ENCODE measurements at regions of chr1 and their contacts with region 1.

Region 1: GRCh38 chr1:212477014-212477679 is 44.4 kb downstream of the NENF start:
- DNase-seq: peak; percentile 71
- H3K4me3 ChIP-seq: no peak overlapping the region
- H3K27ac ChIP-seq: no peak overlapping the region
- H3K27me3 ChIP-seq: peaks cover 12% of the 10 kb centered on the region
- CTCF ChIP-seq: peak; percentile 97

Region 2: DNA sequence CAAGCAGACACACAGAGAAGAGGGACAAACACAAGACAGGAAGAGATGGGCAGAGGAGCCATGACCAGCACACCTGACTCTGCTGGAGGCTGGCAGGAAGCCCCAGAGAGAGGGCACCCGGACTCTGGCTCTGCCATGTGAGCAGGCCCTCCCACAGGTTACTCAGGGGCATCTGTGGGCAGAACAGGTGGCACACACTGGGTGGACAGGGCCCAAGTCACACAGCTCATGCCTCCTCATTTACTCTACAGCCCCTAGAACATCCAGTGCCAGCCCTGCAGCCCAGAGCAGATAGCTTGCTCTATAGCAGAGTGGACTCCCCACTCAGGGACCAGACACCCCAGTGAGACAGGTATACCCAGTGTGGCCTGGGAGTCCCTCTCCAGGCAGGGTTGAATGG is 91.1 kb before region 1 on chr1:
- CTCF ChIA-PET with region 1: no interaction called
- POLR2A ChIA-PET with region 1: no interaction called
- DNase-seq: no peak
- H3K4me3 ChIP-seq: no peak overlapping the region
- H3K27ac ChIP-seq: no peak overlapping the region
- H3K27me3 ChIP-seq: no peaks in the 10 kb centered on the region
- CTCF ChIP-seq: no peak

Region 3: DNA sequence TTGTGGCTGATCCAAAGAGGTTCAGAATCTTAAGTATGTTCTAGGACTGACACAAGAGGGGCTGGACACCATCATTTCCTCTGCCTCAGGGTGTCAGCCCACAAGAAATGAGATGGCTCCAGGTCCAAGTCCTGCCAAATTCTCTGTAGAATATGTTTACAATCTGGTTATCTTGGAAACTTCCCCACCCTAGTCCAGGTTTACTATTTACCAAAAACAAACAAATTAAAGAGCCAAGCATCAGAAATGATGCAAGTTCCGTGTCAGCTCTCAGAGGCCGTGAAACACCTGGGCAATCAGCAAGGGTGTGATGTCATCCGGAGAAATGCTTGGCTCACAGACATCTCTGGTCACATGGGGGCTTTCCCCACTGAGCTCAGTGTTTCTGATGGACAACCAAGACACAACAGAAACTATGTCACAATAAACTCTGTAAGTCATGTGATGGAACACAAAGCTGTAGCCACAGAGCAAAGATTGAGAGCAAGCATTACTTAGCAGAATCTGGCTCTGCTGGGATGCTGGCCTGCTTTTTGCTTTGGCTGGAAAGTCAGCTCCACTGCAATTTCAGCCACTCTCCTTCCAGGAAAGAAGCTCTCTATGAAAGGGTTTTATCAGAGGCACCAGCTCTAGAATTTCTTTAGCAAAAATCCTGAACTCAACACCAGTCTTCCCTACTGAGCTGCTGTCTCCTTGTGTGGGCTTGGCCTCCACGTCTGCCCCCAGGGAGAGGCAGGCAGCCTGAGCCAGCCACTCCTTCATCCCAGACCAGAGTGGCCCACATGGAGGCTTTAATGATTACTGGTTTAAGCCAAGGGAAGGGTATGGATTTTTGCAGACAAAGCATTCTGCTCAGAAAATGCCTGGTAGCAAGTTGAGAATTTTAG is 11.5 kb after region 1 on chr1:
- CTCF ChIA-PET with region 1: interaction called, 27 read pairs
- POLR2A ChIA-PET with region 1: no interaction called
- DNase-seq: peak; percentile 81
- H3K4me3 ChIP-seq: no peak overlapping the region
- H3K27ac ChIP-seq: peak overlapping the region; percentile 89
- H3K27me3 ChIP-seq: no peaks in the 10 kb centered on the region
- CTCF ChIP-seq: no peak

Region 4: DNA sequence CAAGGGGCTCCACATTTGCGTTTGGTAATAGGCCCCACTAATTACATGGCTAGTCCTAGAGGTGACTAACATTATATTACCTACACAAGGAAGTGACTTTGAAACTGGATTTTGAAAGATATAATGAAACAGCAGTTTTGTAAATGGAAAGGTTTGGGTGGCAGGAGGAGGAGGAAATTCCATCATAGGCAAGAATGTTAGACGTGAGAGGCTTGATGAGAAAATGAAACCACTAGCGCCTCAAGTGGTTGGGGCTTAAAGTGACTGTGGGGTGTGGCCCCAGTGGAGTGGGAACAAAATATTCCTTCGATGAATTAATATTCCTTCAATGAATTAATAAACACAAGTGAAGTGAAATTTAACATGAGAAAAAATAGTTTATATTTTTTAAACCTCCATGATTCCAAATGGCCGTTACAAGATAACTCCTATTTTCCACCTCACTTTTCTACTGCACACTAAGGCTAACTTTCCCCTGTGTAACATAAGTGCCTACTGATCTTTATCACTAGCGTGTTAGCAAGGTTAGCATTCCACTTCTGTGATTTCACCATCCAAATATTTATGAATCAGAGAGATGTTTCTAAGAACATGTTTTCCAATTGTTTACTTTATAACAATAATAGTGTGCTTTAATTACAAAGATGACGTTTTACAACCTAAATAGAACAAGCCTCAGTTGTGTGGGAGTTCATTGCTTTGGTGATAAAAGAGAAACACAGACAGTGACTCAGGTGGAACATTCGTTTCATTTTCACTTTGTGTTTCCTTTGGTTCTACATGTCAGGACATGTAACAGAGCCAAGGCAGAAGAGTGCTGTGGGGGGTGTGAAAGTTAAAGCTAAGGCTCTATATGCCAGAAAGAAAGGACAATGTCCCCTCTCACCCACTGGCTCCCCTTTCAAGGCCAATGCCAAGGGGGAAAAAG is 118.9 kb after region 1 on chr1:
- CTCF ChIA-PET with region 1: interaction called, 21 read pairs
- POLR2A ChIA-PET with region 1: no interaction called
- DNase-seq: peak; percentile 93
- H3K4me3 ChIP-seq: peak overlapping the region; percentile 50
- H3K27ac ChIP-seq: peak overlapping the region; percentile 100
- H3K27me3 ChIP-seq: peaks cover 3% of the 10 kb centered on the region
- CTCF ChIP-seq: peak; percentile 74

Region 5: DNA sequence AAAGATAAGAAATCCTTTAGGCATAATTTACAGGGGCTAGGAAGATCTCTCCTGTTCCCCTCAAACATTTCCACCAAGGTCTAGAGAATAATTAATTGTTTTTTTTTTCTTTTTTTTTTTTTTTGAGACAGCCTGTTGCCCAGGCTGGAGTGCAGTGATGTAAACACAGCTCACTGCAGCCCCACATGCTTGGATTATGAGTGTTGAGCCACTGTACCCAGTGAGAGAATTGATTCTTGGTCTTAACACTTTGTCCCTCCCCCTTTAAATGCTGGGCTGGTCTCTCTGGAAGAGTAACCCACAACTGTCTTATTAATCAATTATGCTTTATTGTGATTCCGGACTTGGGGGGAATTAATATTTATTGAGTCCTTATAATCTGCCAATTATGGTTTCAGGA is 164.8 kb after region 1 on chr1:
- CTCF ChIA-PET with region 1: interaction called, 10 read pairs
- POLR2A ChIA-PET with region 1: no interaction called
- DNase-seq: no peak
- H3K4me3 ChIP-seq: no peak overlapping the region
- H3K27ac ChIP-seq: no peak overlapping the region
- H3K27me3 ChIP-seq: peaks cover 11% of the 10 kb centered on the region
- CTCF ChIP-seq: no peak

Region 6: DNA sequence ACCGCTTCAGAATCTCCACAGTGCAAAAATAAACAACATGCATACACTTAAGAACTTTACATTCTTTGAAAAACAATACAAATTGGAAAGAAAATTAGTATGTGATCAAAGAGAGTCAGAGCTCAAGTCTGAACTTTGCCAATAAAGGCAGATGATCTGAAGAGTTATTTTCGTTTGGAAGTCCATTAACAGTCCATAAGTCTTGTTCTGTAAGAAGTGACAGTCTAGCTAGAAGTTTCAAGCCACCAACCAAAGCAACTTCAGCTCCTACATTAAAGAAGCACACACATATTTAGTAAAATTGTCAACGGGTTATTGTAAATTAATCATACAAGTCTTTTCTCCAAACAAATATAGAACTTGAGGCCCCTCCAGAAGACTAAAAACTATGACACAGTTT is 517.8 kb after region 1 on chr1:
- CTCF ChIA-PET with region 1: interaction called, 11 read pairs
- POLR2A ChIA-PET with region 1: no interaction called
- DNase-seq: no peak
- H3K4me3 ChIP-seq: no peak overlapping the region
- H3K27ac ChIP-seq: no peak overlapping the region
- H3K27me3 ChIP-seq: no peaks in the 10 kb centered on the region
- CTCF ChIP-seq: no peak

Measured in AG04450 (cell line).